OCI-LY7 (cell line): ENCODE measurements at regions of chr10 and their contacts with region 1.

Region 1: DNA sequence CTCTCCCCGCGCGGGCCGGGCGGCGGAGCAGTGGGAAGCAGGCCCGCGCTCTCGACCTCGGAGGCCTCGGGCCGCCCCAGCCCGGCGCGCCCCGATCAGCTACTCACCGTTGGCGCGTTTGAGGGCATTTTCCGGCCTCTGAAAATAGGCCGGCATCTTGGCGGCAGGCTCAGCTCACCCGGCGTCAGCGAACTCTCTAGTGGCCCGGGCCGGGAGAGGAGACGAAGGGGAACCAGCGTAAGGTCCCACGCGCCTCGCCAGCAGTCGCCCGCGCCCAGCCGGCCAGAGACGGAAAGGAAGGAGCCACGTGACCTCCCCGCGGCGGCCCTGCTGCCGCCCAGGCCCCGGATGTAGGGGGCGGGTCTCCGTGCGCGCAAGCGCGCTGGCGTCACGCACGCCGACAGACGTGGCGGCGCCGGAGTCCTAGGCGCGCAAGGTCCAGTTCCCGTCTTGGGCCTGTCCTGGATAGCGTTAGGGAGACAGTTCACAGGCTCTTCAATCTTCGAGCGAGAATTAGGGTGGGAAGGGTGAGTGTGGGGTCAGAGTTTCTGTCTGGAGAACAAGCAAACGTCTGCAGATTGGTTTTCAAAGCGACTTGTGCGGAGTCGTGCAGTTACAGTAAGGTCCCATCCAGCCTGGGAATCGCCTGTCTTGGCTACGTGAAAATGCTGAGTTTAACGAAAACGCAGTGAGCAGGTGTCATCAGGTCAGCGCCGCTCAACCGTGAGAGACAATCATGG is at the start of gene EIF3A:
- DNase-seq: peak; percentile 94
- H3K4me3 ChIP-seq: peak within 1 kb of the TSS; percentile 79
- H3K27ac ChIP-seq: peak within 1 kb of the TSS; percentile 70
- H3K4me1 ChIP-seq: peaks cover 45% of the 10 kb centered on the region
- CTCF ChIP-seq: no peak
- total RNA-seq, gene EIF3A: 83.0 and 96.2 TPM in 2 replicates

Region 2: DNA sequence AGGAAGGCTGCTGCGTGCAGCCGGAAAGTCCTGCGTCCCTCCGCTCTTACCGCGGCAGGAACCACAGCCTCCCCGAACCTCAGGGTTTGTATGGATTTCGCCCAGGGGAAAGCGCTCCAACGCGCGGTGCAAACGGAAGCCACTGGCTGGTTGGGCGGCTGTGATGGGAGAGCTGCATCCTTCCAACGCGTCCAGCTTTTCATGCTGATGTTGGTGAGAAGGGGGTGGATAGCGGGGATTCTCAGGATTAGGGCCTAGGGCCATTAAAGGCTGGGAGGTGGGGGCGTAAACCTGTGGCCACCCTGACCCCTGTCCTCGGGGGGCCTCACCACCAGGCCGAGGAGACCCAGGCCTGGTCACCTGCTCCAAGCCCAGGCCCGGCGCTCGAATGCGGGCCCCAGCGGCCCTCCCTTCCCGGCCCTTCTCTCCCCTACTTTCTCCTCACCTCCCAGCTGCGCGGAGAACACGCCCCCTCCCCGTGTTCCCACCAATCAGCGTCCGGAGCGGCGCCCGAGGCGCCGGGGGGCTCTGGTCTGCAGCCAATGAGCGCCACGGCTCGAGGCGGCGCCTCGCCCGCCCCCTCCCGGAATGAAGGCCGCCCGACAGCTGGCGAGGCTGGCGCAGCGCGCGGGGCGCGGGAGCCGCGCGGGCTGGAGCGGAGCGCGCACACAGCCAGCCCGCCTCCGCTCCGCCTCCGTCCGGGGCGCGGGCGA is 51.6 kb before region 1 on chr10:
- CTCF ChIA-PET with region 1: no interaction called
- POLR2A ChIA-PET with region 1: interaction called, 4 read pairs
- intact Hi-C with region 1: loop called (anchors 2 kb)
- DNase-seq: peak; percentile 92
- H3K4me3 ChIP-seq: peak overlapping the region; percentile 53
- H3K27ac ChIP-seq: no peak overlapping the region
- H3K4me1 ChIP-seq: peaks cover 37% of the 10 kb centered on the region
- CTCF ChIP-seq: no peak

Region 3: DNA sequence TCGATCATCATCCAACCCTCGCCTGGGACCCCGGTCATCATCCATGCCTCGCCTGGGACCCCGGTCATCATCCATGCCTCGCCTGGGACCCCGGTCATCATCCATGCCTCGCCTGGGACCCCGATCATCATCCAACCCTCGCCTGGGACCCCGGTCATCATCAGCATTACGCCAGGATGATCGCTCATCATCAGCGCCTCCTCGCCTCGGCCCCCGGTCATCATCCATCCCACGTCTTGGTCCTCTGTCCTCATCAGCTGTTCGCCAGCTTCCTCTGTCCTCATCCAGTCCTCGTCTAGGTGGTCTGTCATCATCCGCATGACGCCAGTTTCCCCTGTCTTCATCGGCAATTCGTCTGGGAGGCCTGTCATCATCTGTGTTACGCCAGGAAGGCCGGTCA is 38.5 kb before region 1 on chr10:
- CTCF ChIA-PET with region 1: no interaction called
- POLR2A ChIA-PET with region 1: interaction called, 11 read pairs
- intact Hi-C with region 1: no loop called
- DNase-seq: no peak
- H3K4me3 ChIP-seq: no peak overlapping the region
- H3K27ac ChIP-seq: no peak overlapping the region
- H3K4me1 ChIP-seq: no peaks in the 10 kb centered on the region
- CTCF ChIP-seq: no peak

Region 4: DNA sequence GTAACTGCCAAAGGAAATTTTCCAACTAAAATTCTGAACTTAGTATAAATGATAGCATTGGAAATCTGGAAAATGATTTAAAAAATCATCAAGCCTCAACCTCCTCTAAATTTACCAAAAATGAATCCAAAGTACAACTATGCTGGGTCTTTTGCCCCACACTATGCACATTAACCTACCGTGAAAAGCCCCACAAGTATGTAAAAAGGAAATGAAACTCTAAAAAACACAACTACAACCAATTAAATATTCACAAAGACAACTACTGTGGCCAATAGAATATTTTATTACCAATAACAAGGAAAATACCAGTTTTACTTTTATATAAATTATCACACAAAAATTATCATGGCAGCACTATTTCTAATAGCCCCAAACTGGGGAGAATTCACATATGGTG is 19.3 kb before region 1 on chr10:
- CTCF ChIA-PET with region 1: no interaction called
- POLR2A ChIA-PET with region 1: interaction called, 10 read pairs
- intact Hi-C with region 1: no loop called
- DNase-seq: no peak
- H3K4me3 ChIP-seq: no peak overlapping the region
- H3K27ac ChIP-seq: no peak overlapping the region
- H3K4me1 ChIP-seq: peaks cover 9% of the 10 kb centered on the region
- CTCF ChIP-seq: no peak

Region 5: DNA sequence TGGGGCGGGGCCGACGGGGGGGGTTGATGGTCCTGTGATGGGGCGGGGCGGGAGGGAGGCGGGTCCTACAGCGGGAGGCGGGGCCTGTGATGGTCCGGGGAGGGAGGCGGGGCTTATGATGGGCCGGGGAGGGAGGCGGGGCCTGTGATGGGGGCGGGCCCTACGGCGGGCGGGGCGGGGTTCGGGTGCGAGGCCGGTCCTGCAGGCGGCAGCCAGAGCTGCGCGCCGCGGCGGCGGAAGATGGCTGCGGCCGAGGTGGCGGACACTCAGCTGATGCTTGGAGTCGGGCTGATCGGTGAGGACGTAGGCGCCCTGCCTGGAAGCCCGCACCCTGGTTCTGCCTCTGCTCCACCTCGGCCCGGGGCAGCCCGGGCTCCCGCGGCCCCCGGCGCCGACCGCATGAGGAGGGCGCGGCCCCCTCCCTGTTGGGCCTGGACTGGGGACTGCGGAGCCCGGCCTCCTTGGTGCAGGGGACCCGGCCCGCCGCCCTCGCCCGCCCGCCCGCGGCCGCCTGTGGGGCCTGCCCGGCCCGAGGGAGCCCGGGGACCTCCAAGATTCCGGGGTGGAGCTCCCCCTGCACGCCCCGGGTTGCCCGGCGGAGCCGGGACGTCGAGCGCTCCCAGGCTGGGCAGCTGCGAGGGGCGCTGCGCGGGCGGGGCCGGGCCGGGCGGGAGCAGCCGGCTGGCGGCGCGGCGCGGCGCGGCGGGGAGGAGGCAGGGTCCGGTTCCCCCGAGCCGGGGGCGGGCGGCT is 23.4 kb after region 1 on chr10 and contains the start of gene DENND10:
- CTCF ChIA-PET with region 1: interaction called, 4 read pairs
- POLR2A ChIA-PET with region 1: interaction called, 10 read pairs
- intact Hi-C with region 1: no loop called
- DNase-seq: peak; percentile 83
- H3K4me3 ChIP-seq: peak within 1 kb of the TSS; percentile 83
- H3K27ac ChIP-seq: no peak within 1 kb of the TSS
- H3K4me1 ChIP-seq: peaks cover 17% of the 10 kb centered on the region
- CTCF ChIP-seq: no peak
- total RNA-seq, gene DENND10: 17.8 and 18.0 TPM in 2 replicates

Region 6: DNA sequence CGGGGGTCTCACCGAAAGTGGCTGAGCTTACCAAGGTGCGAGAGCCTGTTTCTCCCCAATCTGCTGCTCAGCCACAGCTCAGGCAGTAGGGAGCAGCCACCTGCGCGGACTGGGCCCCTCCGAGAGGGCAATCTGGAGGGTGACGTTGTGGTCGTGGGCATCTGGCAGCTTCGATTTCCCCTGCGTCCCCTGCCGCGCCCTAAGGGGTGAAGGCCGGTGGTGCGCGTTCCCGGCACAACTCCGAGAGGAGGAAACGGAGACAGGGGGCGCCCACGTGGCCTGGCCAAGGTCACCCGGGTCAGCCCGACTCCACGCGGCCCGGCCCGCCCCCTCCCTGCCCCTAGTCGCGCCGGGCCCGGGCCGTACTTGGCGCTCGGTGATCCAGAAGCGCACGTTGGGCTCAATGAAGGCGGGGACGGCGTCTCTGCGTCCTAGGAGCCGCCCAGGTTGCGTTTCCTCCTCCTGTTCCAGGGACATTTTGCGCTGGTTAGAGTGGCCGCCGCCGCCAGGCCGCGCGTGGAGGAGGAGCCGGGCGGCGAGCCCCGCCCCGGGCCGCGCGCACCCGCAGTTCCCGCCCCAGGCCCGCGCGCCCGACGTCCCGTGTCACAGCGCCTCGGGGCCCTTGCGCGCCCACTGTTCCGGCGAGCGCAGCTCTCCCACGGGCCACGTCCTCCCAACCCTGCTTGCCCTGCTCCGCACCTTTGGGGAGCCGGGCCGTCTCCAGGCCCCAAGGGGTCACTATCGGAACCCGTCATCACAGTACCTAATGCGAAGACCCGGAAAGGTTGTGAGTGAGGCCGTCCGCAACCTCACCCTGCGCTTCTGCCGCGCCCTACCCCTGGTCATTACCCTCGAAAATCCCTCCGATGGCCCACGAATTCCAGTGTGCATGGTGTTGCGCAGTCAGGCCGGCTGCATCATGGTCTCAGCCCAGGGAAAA is 84.8 kb after region 1 on chr10 and contains the start of gene SFXN4:
- CTCF ChIA-PET with region 1: no interaction called
- POLR2A ChIA-PET with region 1: interaction called, 5 read pairs
- intact Hi-C with region 1: loop called (anchors 1 kb)
- DNase-seq: peak; percentile 80
- H3K4me3 ChIP-seq: peak within 1 kb of the TSS; percentile 82
- H3K27ac ChIP-seq: peak within 1 kb of the TSS; percentile 57
- H3K4me1 ChIP-seq: peaks cover 26% of the 10 kb centered on the region
- CTCF ChIP-seq: 0 out of 2 replicates have a peak, but pooled peaks have one; percentile 8
- total RNA-seq, gene SFXN4: 27.8 and 35.9 TPM in 2 replicates

Region 7: GRCh38 chr10:119466655-119467054 is 386.0 kb after region 1 on chr10:
- CTCF ChIA-PET with region 1: no interaction called
- POLR2A ChIA-PET with region 1: no interaction called
- intact Hi-C with region 1: no loop called
- DNase-seq: no peak
- H3K4me3 ChIP-seq: no peak overlapping the region
- H3K27ac ChIP-seq: no peak overlapping the region
- H3K4me1 ChIP-seq: no peaks in the 10 kb centered on the region
- CTCF ChIP-seq: no peak

Region 8: GRCh38 chr10:119705434-119705831 is 624.7 kb after region 1 on chr10:
- CTCF ChIA-PET with region 1: no interaction called
- POLR2A ChIA-PET with region 1: no interaction called
- intact Hi-C with region 1: loop called (anchors 10 kb)
- DNase-seq: peak; percentile 8
- H3K4me3 ChIP-seq: no peak overlapping the region
- H3K27ac ChIP-seq: no peak overlapping the region
- H3K4me1 ChIP-seq: peaks cover 48% of the 10 kb centered on the region
- CTCF ChIP-seq: no peak